GM10248 (cell line): ENCODE measurements at regions of chr11 and their contacts with region 1.

Region 1: DNA sequence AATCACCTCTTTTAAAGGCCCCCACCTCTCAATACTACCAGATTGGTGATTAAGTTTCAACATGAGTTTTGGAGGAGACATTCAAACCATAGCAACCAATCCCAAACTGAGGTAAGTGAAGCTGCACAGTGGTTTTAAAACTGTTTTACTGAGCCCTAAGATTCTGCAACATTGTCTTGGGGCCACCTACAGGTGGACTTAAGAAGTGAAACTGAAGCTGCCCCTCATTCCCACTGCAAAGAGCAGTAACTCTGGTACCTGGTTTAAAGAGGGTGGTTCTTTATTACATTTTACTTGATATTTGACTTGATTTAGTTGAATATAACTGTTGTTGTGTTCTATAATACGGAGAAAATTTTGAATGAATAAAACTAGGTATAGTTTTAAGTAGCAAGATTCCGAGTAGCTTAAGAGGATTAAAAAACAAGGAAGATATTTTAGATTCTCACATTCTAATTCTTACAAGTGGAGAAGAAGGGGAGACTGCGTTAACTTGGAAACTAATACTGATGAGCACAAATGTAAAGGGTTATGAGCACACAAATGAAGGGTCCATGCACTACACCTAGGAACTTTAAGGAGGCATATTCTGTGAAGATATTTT is 26.7 kb downstream of the SYT9 start:
- DNase-seq: peak; percentile 31
- CTCF ChIP-seq: peak; percentile 56

Region 2: GRCh38 chr11:7291100-7291829 is 12.8 kb after region 1 on chr11:
- CTCF ChIA-PET with region 1: interaction called, 20 read pairs
- POLR2A ChIA-PET with region 1: no interaction called
- DNase-seq: no peak
- CTCF ChIP-seq: no peak